ENCODE measurements at regions of chr2 and their contacts with region 1.

Region 1: DNA sequence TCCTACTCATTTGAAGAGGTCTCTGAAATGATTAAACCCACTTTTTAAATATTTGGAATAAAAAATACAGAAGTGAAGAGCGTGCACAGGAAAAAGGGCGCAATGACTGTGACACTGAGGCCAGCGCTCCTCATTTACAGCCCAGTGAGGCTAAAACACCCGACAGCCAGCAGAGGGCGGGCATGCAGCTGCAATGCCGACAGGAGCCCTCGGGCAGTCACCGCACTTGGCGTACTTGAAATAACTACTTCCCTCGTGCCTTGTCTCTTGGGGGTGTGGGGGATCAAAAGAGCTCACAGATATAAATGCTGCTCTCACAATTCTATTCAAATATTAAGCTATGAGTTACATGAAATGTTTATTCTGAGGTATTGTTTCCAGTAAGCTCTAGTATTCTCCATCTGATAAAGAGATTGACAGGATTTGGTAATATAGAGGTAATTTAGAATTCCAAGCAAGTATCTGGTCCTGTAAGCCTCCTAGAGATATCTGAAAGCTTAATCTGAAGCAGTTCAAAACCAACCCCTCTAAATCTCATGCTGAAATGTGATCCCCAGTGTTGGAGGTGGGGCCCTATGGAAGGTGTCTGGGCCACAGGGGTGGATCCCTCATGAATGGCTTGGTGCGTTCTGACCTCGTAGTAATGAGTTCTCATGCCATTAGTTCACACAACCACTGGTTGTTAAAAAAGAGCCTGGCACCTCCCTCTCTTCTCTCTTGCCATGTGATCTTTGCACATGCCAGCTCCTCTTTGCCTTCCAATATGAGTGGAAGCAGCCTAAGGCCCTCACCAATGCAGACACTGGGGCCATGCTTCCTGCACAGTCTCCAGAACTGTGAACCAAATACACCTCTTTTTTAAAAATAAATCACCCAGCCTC is 93.6 kb downstream of the ZAP70 start:
- DNase-seq: peak; percentile 86
- ATAC-seq: peak; percentile 97
- H3K4me3 Mint-ChIP-seq: no peak overlapping the region
- H3K27ac Mint-ChIP-seq: no peak overlapping the region
- H3K4me1 Mint-ChIP-seq: peaks cover 2% of the 10 kb centered on the region
- H3K27me3 Mint-ChIP-seq: no peaks in the 10 kb centered on the region

Region 2: GRCh38 chr2:97710596-97711386 is 96.2 kb before region 1 on chr2:
- CTCF ChIA-PET with region 1: no interaction called
- DNase-seq: peak; percentile 43
- ATAC-seq: no peak
- H3K4me3 Mint-ChIP-seq: no peak overlapping the region
- H3K27ac Mint-ChIP-seq: peak overlapping the region; percentile 47
- H3K4me1 Mint-ChIP-seq: peaks cover 47% of the 10 kb centered on the region
- H3K27me3 Mint-ChIP-seq: no peaks in the 10 kb centered on the region

Region 3: GRCh38 chr2:97774425-97774824 is 32.6 kb before region 1 on chr2:
- CTCF ChIA-PET with region 1: interaction called, 12 read pairs
- DNase-seq: no peak
- ATAC-seq: no peak
- H3K4me3 Mint-ChIP-seq: no peak overlapping the region
- H3K27ac Mint-ChIP-seq: no peak overlapping the region
- H3K4me1 Mint-ChIP-seq: peaks cover 6% of the 10 kb centered on the region
- H3K27me3 Mint-ChIP-seq: no peaks in the 10 kb centered on the region

Region 4: GRCh38 chr2:97870396-97870843 is 63.4 kb after region 1 on chr2:
- CTCF ChIA-PET with region 1: interaction called, 11 read pairs
- DNase-seq: peak; percentile 90
- ATAC-seq: peak; percentile 99
- H3K4me3 Mint-ChIP-seq: peak overlapping the region; percentile 21
- H3K27ac Mint-ChIP-seq: peak overlapping the region; percentile 79
- H3K4me1 Mint-ChIP-seq: peaks cover 34% of the 10 kb centered on the region
- H3K27me3 Mint-ChIP-seq: peaks cover 4% of the 10 kb centered on the region

Region 5: GRCh38 chr2:97982621-97983020 is 175.6 kb after region 1 on chr2:
- CTCF ChIA-PET with region 1: no interaction called
- DNase-seq: no peak
- ATAC-seq: no peak
- H3K4me3 Mint-ChIP-seq: no peak overlapping the region
- H3K27ac Mint-ChIP-seq: no peak overlapping the region
- H3K4me1 Mint-ChIP-seq: peaks cover 16% of the 10 kb centered on the region
- H3K27me3 Mint-ChIP-seq: no peaks in the 10 kb centered on the region

Region 6: GRCh38 chr2:98385050-98385699 is 578.2 kb after region 1 on chr2:
- CTCF ChIA-PET with region 1: interaction called, 14 read pairs
- DNase-seq: peak; percentile 82
- ATAC-seq: peak; percentile 93
- H3K4me3 Mint-ChIP-seq: no peak overlapping the region
- H3K27ac Mint-ChIP-seq: no peak overlapping the region
- H3K4me1 Mint-ChIP-seq: peaks cover 2% of the 10 kb centered on the region
- H3K27me3 Mint-ChIP-seq: peaks cover 28% of the 10 kb centered on the region